ENCODE measurements at regions of chr19 and their contacts with region 1.

Region 1: DNA sequence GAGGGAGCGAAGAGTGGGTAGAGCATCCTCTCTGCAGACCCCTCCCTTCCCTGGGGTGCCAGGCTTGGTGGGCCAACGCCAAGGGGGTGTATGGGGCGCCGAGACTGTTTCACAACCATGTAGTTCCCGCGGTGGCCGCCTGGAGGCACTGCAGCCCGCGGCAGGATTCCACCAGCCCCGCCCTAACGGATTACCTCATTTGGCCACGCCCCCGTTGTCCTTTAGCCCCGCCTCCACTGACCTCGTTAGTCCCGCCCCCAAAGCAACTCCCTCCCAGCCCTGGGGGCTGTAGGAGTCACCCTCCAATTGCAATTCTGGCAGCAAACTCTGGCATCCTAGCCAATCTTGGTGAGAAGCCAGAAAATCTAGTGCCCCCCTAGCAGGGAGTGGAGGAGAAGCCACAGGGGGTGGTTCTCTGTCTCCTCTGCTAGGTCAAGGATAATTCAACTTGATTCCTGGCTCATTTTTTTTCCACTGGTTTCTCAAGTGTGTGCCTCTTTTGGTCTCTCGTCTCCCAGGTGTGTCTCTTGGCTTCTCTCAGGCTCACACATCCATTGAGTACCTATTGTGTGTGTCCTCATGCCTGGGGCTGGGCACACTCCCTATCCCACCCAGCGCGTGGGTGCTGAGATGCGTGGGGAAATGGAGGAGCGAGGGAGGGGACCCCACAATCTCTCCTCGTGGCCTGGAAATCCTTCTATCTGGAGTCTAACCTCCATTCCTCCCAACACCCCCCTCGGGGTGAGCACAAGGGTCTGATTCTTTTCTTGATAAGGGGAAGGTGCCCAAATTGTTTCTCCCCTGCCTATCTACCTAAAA is 2.0 kb downstream of the OLFM2 start:
- DNase-seq: peak; percentile 50
- H3K4me3 ChIP-seq: no peak overlapping the region
- H3K27ac ChIP-seq: no peak overlapping the region
- H3K4me1 ChIP-seq: no peaks in the 10 kb centered on the region
- H3K27me3 ChIP-seq: peaks cover 18 to 19% of the 10 kb centered on the region in 2 experiments
- CTCF ChIP-seq: peak; percentile 89 to 92
- POLR2A ChIP-seq: no peak

Region 2: GRCh38 chr19:9636018-9636417 is 298.3 kb before region 1 on chr19:
- CTCF ChIA-PET with region 1: no interaction called
- POLR2A ChIA-PET with region 1: no interaction called
- dilution Hi-C with region 1: no loop called
- intact Hi-C with region 1: no loop called
- DNase-seq: no peak
- H3K4me3 ChIP-seq: no peak overlapping the region
- H3K27ac ChIP-seq: no peak overlapping the region
- H3K4me1 ChIP-seq: no peaks in the 10 kb centered on the region
- H3K27me3 ChIP-seq: no peaks in the 10 kb centered on the region
- CTCF ChIP-seq: no peak
- POLR2A ChIP-seq: no peak

Region 3: GRCh38 chr19:9877775-9878510 is 56.4 kb before region 1 on chr19:
- CTCF ChIA-PET with region 1: no interaction called
- POLR2A ChIA-PET with region 1: no interaction called
- dilution Hi-C with region 1: no loop called
- intact Hi-C with region 1: no loop called
- DNase-seq: no peak
- H3K4me3 ChIP-seq: no peak overlapping the region
- H3K27ac ChIP-seq: no peak overlapping the region
- H3K4me1 ChIP-seq: peaks cover 5% of the 10 kb centered on the region
- H3K27me3 ChIP-seq: no peaks in the 10 kb centered on the region
- CTCF ChIP-seq: no peak
- POLR2A ChIP-seq: no peak

Region 4: DNA sequence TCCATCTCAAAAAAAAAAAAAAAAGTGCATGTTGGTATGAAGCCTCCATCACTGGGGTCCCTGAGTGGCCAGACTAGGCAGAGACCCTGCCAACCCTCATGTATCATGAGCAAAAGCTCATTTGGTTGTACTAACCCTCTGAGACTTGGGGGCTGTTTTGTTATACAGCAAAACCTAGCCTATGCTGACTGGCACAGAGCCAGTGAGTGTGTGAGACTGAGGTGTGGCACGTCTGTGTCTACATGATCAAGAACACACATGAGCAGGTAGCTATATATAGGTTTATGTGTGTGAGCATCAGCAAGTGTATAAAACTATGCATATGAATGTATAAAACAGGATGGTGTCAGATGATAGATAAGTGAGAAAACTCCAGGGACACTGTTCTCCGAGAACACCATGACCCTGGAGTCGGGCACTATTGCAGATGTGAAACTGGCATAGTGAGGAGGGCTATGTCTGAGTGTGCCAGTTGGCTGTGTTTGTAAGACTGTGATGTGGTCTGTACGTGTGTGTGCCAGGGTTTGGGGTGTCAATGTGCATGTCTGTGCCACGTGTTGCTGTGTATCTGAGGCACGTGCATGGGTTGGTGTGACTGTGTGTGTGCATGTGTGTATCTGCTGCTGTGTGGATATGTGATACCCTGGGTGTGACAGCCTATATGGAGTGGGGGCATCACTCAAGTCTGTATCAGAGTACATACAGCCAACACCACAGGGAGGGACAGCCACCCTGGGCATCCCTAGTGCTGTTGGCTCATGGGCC is 42.5 kb before region 1 on chr19:
- CTCF ChIA-PET with region 1: no interaction called
- POLR2A ChIA-PET with region 1: no interaction called
- dilution Hi-C with region 1: no loop called
- intact Hi-C with region 1: no loop called
- DNase-seq: no peak
- H3K4me3 ChIP-seq: no peak overlapping the region
- H3K27ac ChIP-seq: no peak overlapping the region
- H3K4me1 ChIP-seq: no peaks in the 10 kb centered on the region
- H3K27me3 ChIP-seq: no peaks in the 10 kb centered on the region
- CTCF ChIP-seq: no peak
- POLR2A ChIP-seq: no peak

Region 5: DNA sequence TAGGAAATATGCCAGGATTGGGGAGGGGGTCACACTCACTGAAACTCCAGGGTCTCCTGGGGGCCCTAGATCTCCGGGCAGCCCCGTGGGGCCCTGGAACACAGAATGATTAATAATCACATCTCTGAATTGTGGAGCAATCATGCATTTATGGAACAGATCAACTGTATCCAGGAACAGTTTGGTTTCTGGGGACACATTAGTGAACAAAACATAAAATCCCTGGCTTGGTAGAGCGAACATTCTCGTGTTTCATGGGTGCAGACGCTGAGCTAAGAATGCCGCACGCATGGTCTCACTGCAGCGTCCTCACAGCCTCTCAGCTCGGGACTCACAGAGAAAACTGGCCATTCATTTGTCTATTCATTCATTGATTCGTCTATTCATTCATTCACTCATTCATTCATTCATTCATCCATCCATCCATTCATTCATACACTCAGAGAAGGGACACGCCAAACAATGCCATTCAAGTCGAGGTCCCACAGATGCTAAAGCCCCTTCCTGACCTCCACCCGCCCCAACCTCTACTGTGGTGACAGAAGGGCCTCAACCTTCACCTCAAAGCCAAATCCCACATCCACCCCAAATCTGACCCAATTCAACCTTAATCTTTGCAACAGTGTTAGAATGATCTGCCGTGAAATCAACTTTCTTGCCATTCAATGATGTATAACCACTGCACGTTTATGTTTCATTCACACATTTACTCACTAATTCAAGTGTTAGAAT is 37.0 kb after region 1 on chr19:
- CTCF ChIA-PET with region 1: no interaction called
- POLR2A ChIA-PET with region 1: no interaction called
- dilution Hi-C with region 1: no loop called
- intact Hi-C with region 1: no loop called
- DNase-seq: no peak
- H3K4me3 ChIP-seq: no peak overlapping the region
- H3K27ac ChIP-seq: no peak overlapping the region
- H3K4me1 ChIP-seq: no peaks in the 10 kb centered on the region
- H3K27me3 ChIP-seq: peaks cover 2 to 5% of the 10 kb centered on the region in 2 experiments
- CTCF ChIP-seq: no peak
- POLR2A ChIP-seq: no peak

Region 6: DNA sequence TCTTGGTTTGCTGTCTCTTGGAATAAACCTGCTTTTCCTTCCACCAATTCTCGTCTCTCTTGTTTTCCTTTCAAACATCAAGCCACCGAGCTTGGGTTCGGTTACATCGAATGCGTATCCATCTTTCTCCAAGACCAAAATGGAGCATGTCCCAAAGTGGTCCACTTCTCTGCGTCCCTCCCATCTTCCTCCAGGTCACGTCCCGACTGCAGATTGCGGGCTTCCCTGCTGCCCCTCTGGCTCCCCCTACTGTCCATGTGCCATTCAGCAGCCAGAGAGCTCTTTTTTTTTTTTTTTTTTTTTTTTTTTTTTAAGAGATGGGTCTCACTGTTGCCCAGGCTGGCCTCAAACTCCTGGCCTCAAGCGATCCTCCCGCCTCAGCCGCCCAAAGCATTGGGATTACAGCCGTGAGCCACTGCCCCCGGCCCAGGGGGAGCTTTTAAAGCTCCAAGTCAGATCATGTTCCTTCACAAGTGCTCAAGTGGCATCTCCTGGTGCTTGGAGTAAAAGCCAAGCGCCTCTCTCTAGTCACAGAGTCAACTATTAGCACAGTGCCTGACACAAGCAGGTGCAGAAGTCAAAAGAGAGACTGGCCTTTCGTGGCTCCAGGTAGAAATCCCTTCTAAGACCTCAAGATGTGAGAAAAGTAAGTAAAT is 66.0 kb after region 1 on chr19:
- CTCF ChIA-PET with region 1: interaction called, 58 read pairs
- POLR2A ChIA-PET with region 1: no interaction called
- dilution Hi-C with region 1: no loop called
- intact Hi-C with region 1: loop called (anchors 1 kb)
- DNase-seq: peak; percentile 68
- H3K4me3 ChIP-seq: no peak overlapping the region
- H3K27ac ChIP-seq: no peak overlapping the region
- H3K4me1 ChIP-seq: no peaks in the 10 kb centered on the region
- H3K27me3 ChIP-seq: no peaks in the 10 kb centered on the region
- CTCF ChIP-seq: peak; percentile 76 to 85
- POLR2A ChIP-seq: no peak

Region 7: DNA sequence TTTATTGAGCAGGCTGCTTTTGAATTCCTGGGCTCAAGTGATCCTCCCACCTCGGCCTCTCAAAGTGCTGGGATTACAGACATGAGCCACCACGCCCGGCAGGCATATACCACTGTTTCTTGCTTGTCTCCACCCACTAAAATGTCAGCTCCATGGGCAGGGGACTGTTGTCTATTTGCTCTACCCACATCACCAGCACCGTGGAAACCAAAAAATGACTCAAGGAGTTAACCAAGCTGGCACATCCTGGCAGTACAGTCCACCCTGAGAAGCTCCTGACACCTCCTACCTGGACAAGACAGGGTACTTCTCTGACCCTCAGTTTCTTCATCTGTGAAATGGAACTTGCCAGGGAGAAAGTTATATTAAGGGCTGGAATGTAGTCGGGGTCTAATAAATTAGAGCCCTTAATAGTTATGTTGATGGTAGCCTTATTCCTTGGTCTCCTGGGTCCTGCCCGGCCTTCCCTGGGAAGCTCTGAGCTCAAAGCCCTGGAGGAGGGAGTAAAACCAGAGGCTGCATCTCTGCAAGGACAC is 92.9 kb after region 1 on chr19:
- CTCF ChIA-PET with region 1: interaction called, 191 read pairs
- POLR2A ChIA-PET with region 1: interaction called, 4 read pairs
- dilution Hi-C with region 1: no loop called
- intact Hi-C with region 1: loop called (anchors 1 kb)
- DNase-seq: no peak
- H3K4me3 ChIP-seq: no peak overlapping the region
- H3K27ac ChIP-seq: no peak overlapping the region
- H3K4me1 ChIP-seq: peaks cover 4% of the 10 kb centered on the region
- H3K27me3 ChIP-seq: peaks cover 3 to 4% of the 10 kb centered on the region in 2 experiments
- CTCF ChIP-seq: no peak
- POLR2A ChIP-seq: no peak

Region 8: DNA sequence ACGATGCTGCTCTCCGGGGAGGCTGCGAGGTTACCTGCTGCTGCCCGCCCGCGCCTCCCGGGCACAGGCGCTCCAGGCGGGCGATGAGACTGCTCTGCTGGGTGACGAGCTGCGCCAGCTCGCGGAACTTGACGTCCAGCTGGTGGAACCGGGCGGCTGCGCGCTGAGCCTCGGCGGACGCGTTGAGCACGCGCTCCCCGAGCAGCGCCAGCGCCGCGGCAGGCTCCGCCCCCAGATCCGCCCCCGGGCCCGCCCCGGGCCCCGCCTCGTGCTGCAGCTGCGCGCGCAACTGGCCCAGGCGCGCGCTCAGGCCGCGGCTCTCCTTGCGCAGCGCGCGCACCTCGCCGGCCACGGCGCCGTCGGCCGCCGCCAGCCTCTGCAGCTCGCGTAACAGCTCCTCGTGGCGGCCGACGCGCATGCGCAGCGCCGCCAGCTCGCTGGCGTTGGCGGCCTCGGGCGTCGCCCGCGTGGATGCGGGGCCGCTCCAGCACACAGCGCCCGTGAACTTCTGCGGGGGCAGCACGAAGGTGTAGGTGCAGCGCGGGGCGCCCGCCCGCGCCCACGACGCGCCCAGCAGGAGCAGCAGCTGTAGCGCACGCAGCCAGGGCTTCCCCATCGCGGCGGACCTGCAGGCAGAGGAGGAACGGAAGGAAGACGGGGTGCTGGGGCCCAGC is 161.7 kb after region 1 on chr19:
- CTCF ChIA-PET with region 1: interaction called, 3 read pairs
- POLR2A ChIA-PET with region 1: no interaction called
- dilution Hi-C with region 1: no loop called
- intact Hi-C with region 1: loop called (anchors 2 kb)
- DNase-seq: peak; percentile 91
- H3K4me3 ChIP-seq: peak overlapping the region in 1 of 3 experiments; percentile 35
- H3K27ac ChIP-seq: no peak overlapping the region
- H3K4me1 ChIP-seq: peaks cover 3% of the 10 kb centered on the region
- H3K27me3 ChIP-seq: peaks cover 0 to 3% of the 10 kb centered on the region in 2 experiments
- CTCF ChIP-seq: no peak
- POLR2A ChIP-seq: peak; percentile 75

Region 9: DNA sequence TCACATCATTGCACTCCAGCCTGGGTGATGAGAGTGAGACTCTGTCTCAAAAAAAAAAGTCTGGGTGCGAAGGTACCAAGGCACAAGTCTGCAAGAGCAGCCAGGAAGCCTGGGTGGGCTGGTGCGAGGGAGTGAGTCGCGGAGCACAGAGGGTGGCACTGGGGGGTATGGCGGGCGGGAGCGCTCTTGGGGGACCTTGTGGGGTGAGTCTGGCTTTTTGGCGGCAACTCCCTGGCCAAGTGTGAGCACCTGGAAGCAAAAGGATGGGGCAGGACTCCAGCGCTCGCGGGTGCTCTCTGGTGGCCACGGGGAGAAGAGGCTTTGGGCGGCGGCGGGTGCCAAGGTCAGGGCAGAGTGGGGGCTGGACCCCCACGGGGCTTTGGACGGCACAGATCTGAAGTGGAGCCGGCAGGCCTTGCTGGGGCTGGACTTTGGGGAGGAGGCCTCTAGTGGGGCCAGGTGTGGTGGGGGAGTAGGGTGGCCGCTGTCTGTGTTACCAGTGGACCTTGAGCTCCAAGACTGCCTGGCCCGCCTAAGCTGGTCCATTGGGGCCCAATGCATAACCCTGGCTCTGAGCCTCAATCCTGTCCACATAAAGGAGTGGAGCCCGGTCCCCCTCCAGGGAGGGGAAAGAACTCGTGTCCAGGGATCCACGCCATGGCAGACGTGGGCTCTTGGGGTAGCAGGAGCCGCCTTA is 178.7 kb after region 1 on chr19:
- CTCF ChIA-PET with region 1: interaction called, 11 read pairs
- POLR2A ChIA-PET with region 1: interaction called, 3 read pairs
- dilution Hi-C with region 1: no loop called
- intact Hi-C with region 1: no loop called
- DNase-seq: no peak
- H3K4me3 ChIP-seq: no peak overlapping the region
- H3K27ac ChIP-seq: no peak overlapping the region
- H3K4me1 ChIP-seq: no peaks in the 10 kb centered on the region
- H3K27me3 ChIP-seq: no peaks in the 10 kb centered on the region
- CTCF ChIP-seq: peak; percentile 65 to 81
- POLR2A ChIP-seq: peak; percentile 86

Region 10: GRCh38 chr19:10245189-10245939 is 311.0 kb after region 1 on chr19:
- CTCF ChIA-PET with region 1: interaction called, 65 read pairs
- POLR2A ChIA-PET with region 1: no interaction called
- dilution Hi-C with region 1: no loop called
- intact Hi-C with region 1: loop called (anchors 2 kb)
- DNase-seq: no peak
- H3K4me3 ChIP-seq: no peak overlapping the region
- H3K27ac ChIP-seq: no peak overlapping the region
- H3K4me1 ChIP-seq: no peaks in the 10 kb centered on the region
- H3K27me3 ChIP-seq: no peaks in the 10 kb centered on the region
- CTCF ChIP-seq: no peak
- POLR2A ChIP-seq: no peak

Region 11: GRCh38 chr19:10388957-10389356 is 454.6 kb after region 1 on chr19:
- CTCF ChIA-PET with region 1: interaction called, 9 read pairs
- POLR2A ChIA-PET with region 1: no interaction called
- dilution Hi-C with region 1: no loop called
- intact Hi-C with region 1: loop called (anchors 5 kb)
- DNase-seq: peak; percentile 85
- H3K4me3 ChIP-seq: no peak overlapping the region
- H3K27ac ChIP-seq: no peak overlapping the region
- H3K4me1 ChIP-seq: no peaks in the 10 kb centered on the region
- H3K27me3 ChIP-seq: no peaks in the 10 kb centered on the region
- CTCF ChIP-seq: peak; percentile 88 to 93
- POLR2A ChIP-seq: peak; percentile 43